Body of pancreas (tissue), 4 donors: ENCODE measurements at regions of chr12 and their contacts with region 1.

Region 1: DNA sequence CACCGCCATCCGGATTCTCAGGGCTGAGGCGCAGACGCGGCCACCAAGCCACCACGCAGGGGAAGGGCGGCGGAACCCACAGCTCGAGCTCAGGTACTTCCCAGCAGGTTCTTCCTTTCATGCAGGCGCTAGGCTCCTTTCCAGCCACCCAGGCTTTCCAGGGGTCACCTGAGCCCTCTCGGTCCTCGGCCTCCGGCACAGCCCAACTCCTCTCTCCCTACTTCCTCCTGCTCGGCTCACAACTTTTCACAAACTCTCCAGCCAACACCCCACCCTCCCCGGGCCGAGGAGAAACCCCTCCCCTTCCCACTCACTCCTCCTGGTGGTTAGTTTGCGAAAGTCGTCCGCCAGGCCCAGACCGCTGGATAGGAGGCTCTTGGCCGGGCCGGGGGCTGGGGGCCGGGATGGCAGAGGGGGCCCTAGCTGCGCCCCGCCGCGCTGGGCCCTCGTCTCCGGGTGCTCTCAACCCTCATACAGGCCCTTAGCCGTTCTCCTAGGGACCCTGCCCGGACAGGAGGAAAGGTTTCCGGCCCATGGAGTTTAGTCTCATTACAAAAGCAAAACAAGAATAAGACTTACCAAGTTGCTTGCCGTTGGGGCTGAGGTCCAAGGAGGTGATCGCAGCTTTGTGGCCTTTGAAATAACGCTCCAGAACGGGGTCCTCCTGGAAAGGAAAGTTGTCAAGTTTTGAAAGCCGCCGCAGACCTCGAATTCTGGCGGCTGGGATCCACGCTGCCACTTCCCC is at the start of gene GALNT4:
- DNase-seq: peak; percentile 87 to 90 (median 89)
- ATAC-seq: peak; percentile 90
- H3K4me3 ChIP-seq: peak within 1 kb of the TSS; percentile 80 to 99
- H3K27ac ChIP-seq: peak within 1 kb of the TSS; percentile 47 to 94 (median 88)
- H3K4me1 ChIP-seq: peaks cover 37% of the 10 kb centered on the region
- H3K27me3 ChIP-seq: no peaks in the 10 kb centered on the region
- CTCF ChIP-seq: peak; percentile 61 to 83 (median 69)
- POLR2A ChIP-seq: peak; percentile 42 to 86 (median 82)
- total RNA-seq, gene GALNT4: 8.2 to 16.6 TPM

Region 2: DNA sequence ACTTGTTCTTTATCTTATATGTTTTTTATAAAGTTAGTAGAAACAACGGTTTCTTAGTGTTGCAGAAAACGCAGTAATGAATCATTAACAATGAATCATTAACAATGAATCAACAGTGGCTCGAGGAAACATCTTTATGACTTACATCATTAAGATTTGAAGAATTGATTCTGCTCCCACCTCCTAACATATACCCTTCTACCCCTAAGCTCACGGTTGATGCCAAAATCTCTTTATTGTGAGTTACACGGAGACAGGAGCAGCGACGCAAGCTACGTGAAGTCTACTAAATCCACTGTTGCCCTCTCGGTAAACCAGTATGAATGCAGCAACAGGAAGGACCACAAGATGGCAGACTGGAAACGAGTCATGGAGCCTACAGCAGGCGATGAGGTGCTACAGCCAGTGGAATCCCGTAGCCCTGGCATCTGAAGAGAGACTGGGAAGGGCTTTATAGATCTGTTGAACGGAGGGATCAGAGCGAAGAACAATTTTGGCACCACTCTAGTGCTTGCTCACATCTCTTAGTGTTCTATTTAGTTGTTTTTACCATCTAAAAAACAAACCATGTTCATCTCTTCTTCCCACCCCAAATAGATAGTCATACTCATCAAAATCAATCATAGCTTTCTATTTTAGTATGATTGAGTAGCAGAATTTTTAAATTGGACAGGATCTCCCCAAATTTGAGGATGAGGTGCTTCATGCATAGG is 505.1 kb before region 1 on chr12:
- intact Hi-C with region 1: loop called (anchors 10 kb)
- DNase-seq: peak; percentile 74 to 84 (median 82)
- ATAC-seq: peak; percentile 93
- H3K4me3 ChIP-seq: no peak overlapping the region
- H3K27ac ChIP-seq: no peak overlapping the region
- H3K4me1 ChIP-seq: peaks cover 8% of the 10 kb centered on the region
- H3K27me3 ChIP-seq: no peaks in the 10 kb centered on the region
- CTCF ChIP-seq: peak; percentile 26 to 90 (median 84)
- POLR2A ChIP-seq: no peak

Region 3: GRCh38 chr12:89470741-89471509 is 53.8 kb before region 1 on chr12:
- intact Hi-C with region 1: loop called (anchors 5 kb)
- DNase-seq: no peak
- ATAC-seq: peak; percentile 83
- H3K4me3 ChIP-seq: no peak overlapping the region
- H3K27ac ChIP-seq: no peak overlapping the region
- H3K4me1 ChIP-seq: peaks cover 3% of the 10 kb centered on the region
- H3K27me3 ChIP-seq: no peaks in the 10 kb centered on the region
- CTCF ChIP-seq: peak; percentile 25 to 79 (median 68)
- POLR2A ChIP-seq: no peak